HepG2 (cell line): ENCODE measurements at regions of chr5 and their contacts with region 1.

Region 1: GRCh38 chr5:154610321-154611154 is 132.5 kb upstream of the HAND1 start:
- DNase-seq: peak; percentile 55
- ATAC-seq: peak; percentile 98
- H3K4me3 ChIP-seq: peak overlapping the region in 2 of 3 experiments; percentile 10 to 59; a peak in 3 of 6 replicates
- H3K27ac ChIP-seq: no peak overlapping the region
- H3K4me1 ChIP-seq: peaks cover 12% of the 10 kb centered on the region
- H3K27me3 ChIP-seq: peaks cover 1 to 56% of the 10 kb centered on the region in 2 experiments; a peak in 4 of 5 replicates
- CTCF ChIP-seq: peak; percentile 98
- EP300 ChIP-seq: no peak
- POLR2A ChIP-seq: no peak
- RAD21 ChIP-seq: peak; percentile 96

Region 2: GRCh38 chr5:154467655-154468354 is 142.7 kb before region 1 on chr5:
- CTCF ChIA-PET with region 1: interaction called, 32 read pairs
- POLR2A ChIA-PET with region 1: no interaction called
- in situ Hi-C with region 1: loop called (anchors 5 kb)
- intact Hi-C with region 1: loop called (anchors 1 kb)
- DNase-seq: peak; percentile 31
- ATAC-seq: peak; percentile 96
- H3K4me3 ChIP-seq: peak overlapping the region in 1 of 3 experiments; percentile 23; a peak in 1 of 6 replicates
- H3K27ac ChIP-seq: no peak overlapping the region
- H3K4me1 ChIP-seq: peaks cover 54% of the 10 kb centered on the region
- H3K27me3 ChIP-seq: peaks cover 2 to 29% of the 10 kb centered on the region in 2 experiments; a peak in 3 of 5 replicates
- CTCF ChIP-seq: peak; percentile 88
- EP300 ChIP-seq: no peak
- POLR2A ChIP-seq: no peak
- RAD21 ChIP-seq: peak; percentile 67; the same call in 1 of the 2 replicates

Region 3: DNA sequence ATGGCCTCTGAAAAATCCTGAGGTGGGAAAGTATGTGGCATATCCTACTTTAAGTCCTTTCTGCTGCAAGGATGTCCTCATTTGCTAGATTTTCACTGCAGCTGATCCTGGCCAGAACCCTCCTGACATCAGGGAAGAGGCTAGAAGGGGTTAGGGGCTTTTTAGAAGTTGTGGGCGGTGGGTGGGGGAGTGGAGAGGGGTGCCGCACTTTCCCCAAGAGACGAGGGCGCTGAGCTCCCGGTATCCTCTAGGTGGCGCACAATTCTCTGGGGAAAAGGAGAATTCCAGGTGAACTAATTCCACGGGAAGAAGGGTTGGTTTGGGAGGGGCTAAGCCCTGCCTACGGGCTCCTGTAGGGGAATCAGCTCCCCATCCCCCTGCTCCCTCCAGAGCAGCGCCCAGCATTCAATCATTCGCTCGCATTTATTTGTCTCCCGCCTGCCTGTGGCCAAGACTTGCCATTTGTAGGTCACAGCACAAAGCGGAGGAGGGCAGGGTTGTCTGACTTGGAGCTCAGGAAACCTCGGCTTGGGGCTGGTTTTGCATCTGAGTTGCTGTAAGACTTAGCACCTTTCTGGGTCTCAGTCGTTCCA is 89.6 kb before region 1 on chr5:
- CTCF ChIA-PET with region 1: interaction called, 12 read pairs
- POLR2A ChIA-PET with region 1: no interaction called
- in situ Hi-C with region 1: loop called (anchors 5 kb)
- intact Hi-C with region 1: loop called (anchors 1 kb)
- DNase-seq: peak; percentile 34
- ATAC-seq: peak; percentile 81
- H3K4me3 ChIP-seq: no peak overlapping the region
- H3K27ac ChIP-seq: no peak overlapping the region
- H3K4me1 ChIP-seq: no peaks in the 10 kb centered on the region
- H3K27me3 ChIP-seq: peaks cover 0 to 10% of the 10 kb centered on the region in 2 experiments; a peak in 2 of 5 replicates
- CTCF ChIP-seq: peak; percentile 80
- EP300 ChIP-seq: no peak
- POLR2A ChIP-seq: no peak
- RAD21 ChIP-seq: 0 out of 2 replicates have a peak, but pooled peaks have one; percentile 30

Region 4: DNA sequence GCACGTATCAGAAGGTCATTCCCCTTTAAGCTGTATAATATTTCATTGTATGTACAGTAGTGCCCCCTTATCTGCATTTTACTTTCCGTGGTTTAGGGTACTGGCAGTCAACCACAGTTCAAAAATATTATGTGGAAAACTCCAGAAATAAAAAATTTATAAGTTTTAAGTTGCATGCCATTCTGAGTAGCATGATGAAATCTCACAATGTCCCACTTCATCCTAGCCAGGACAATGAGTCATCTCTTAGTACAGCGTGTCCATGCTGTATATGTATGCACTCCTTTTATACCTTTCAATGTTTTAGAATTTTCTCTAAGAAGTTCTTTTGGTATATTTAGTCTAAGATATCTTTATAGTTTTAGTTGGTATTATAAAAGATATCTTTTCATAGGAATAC is 17.5 kb before region 1 on chr5:
- CTCF ChIA-PET with region 1: no interaction called
- POLR2A ChIA-PET with region 1: no interaction called
- in situ Hi-C with region 1: no loop called
- intact Hi-C with region 1: no loop called
- DNase-seq: no peak
- ATAC-seq: no peak
- H3K4me3 ChIP-seq: no peak overlapping the region
- H3K27ac ChIP-seq: no peak overlapping the region
- H3K4me1 ChIP-seq: peaks cover 3% of the 10 kb centered on the region; the same call in 1 of the 2 replicates
- H3K27me3 ChIP-seq: peaks cover 0 to 6% of the 10 kb centered on the region in 2 experiments; a peak in 1 of 5 replicates
- CTCF ChIP-seq: no peak
- EP300 ChIP-seq: no peak
- POLR2A ChIP-seq: no peak
- RAD21 ChIP-seq: no peak